Right ventricle myocardium inferior (tissue), 1 donor: ENCODE measurements at regions of chr11 and their contacts with region 1.

Region 1: DNA sequence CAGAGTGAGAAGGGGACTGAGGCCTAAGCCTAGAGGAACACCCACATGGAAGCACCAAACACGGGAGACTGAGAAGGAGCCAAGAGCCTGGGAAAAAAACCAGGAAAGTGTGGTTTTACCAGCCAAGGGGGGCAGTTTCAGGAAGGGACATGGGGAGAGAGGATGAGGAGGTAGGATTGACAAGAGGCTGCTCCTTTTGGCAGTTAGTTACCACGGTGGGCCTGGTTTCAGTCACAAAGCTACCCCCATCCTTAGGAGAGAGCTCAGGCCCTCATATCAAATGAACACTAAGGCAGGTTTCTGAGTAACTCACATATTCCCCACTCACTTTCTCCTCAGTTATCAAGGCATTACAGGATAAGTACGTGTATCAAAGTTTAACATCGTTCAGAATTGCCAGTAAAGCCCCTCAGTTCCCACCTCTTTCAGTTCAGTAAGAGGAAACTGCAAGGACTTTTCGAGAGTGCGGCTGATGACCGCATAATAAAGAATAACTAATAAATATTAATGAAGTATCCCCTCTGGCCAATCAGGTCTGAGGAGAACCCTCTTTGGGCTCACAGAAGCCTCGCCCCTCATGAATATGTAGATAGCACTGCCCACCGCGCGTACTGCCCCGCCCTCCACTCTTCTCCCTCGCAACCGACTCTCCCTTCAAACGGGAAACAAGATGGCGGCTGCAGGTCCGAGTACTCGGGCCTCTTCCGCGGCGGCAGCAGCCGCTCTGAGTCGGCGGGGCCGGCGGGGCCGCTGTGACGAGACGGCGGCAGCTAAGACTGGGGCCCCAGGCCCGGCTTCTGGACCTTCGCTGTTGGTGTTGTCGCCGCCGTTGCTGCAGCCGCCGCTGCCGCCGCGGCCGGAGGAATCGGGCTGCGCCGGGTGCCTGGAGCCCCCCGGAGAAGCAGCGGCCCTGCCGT is at the start of gene RNF169:
- DNase-seq: peak; percentile 98
- ATAC-seq: peak; percentile 99
- total RNA-seq, gene RNF169: 10.4 TPM

Region 2: DNA sequence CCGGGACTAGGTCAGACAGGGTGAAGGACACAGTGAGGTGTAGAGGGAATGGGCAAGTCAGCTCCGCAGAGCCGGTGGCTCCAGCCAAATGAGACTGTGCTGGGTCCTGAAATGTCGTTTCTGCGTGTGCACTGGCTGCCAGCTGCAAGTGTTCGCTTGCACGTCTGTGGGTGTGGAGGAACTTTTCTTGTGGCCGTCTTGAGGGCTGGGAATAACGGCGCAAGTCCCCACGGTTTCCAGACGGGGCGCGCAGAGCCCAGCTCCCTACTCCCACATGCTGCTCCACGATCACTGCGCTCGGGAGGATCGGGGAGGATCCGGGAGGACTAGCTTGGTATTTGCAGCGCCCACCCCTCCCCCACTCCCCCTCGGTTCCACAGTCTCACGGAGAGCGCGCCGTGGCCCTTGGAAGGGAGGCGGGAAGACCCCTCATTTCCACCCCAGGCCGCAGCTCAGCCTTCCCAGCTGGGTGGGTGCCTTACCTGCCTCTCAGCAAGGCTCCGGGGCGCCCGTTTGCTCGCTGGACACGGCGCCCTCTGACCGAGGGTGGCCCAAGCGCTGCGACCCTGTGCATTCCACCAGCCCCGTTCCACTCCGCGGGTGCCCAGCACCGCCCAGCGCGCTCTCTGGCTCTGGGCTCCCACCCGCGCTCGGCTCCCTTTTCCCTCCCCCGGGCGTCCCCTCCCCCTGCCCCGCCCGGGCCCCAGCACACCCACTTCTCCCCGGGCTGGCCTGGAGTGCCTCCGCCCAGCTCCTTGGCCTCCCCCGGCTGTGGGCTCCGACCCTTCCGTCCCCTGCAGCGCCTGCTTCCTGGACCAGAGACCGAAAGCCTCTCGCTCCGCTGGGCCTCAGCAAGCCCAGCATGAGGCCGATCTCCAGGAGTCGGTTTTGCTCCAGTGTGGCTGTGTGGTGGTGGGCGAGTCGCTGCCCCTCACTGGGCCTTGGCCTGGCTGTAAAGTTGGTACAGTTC is 281.3 kb before region 1 on chr11 and contains the start of gene KCNE3:
- intact Hi-C with region 1: loop called (anchors 10 kb)
- DNase-seq: peak; percentile 81
- ATAC-seq: peak; percentile 91
- total RNA-seq, gene KCNE3: 2.9 TPM

Region 3: DNA sequence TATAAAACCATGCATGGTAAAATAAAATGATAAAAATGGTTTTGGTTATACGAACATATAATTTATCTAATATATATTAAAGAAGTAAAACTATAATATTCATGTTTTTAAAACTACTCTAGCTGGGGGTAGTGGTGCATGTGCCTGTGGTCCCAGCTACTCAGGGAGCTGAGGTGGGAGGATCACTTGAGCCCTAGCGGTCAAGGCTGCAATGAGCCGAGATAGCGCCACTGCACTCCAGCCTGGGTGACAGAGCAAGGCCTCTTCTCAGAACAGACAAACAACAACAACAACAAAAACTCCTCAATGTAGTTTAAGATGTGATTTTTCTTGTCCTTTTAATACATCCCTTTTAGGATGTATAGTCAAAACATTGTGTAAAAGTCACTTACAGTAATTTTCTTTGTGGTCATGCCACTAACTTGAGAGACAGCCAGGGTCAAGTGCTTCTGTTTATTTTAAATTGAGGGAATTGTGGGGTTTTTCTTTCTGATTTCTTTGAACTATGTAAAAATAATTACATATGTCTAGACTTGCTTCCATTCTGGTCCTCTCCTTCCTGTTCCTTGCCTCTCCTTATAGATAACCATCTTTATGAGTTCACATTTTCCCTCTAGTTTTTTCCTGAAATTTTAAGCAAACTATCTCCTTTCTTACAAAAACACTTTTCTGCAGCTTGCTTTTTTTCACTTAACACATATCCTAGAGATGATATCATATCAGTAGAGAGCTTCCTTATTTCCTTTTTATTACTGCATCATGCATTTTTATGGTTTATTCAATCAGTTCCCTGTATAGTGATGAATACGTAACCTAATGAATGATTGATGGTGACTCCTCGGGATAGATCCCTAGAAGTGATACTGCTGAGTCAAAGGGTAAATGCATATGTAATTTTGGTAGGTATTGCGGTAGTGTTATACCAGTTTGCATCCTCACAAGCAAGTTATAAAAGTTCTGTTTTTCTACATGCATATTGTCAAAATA is 339.1 kb after region 1 on chr11:
- intact Hi-C with region 1: no loop called
- DNase-seq: no peak
- ATAC-seq: no peak